Thyroid gland (tissue), 4 donors: ENCODE measurements at regions of chr19 and their contacts with region 1.

Region 1: DNA sequence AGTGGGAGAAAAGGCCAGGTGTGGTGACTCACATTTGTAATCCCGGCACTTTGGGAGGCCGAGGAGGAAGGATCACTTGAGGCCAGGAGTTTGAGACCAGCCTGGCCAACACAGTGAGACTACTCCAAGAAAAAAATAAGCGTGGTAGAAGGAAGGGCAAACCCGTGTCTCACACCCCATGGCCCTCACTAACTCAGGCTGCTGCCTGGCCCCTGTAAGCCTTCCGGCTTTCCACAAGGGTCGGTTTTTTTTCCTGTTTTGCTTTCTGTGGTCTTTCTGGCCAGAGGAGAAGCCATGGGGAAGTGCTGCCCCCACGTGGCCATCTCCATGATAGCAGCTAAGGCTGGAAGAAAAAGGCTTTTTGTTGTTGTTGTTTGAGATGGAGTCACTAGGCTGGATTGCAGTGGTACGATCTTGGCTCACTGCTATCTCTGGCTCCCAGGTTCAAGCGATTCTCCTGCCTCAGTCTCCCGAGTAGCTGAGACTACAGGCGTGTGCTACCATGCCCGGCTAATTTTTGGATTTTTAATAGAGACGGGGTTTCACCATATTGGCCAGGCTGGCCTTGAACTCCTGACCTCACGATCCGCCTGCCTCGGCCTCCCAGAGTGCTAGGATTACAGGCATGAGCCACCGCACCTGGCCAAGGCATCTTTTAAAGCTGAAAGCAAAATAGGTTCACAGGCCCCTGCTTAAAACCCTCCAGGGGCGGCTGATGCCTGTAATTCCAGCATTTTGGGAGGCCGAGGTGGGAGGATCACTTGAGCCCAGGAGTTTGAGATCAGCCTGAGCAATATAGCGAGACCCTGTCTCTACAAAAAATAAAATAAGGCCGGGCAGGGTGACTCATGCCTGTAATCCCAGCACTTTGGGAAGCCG is 7.5 kb upstream of the ARHGEF18 start:
- DNase-seq: peak; percentile 69 to 77
- H3K4me3 ChIP-seq: no peak overlapping the region
- H3K27ac ChIP-seq: no peak overlapping the region
- H3K4me1 ChIP-seq: peaks cover 0 to 8% of the 10 kb centered on the region in 2 donors
- H3K27me3 ChIP-seq: no peaks in the 10 kb centered on the region
- CTCF ChIP-seq: peak; percentile 89 to 93 (median 92)
- POLR2A ChIP-seq: no peak

Region 2: GRCh38 chr19:7101498-7102253 is 239.5 kb before region 1 on chr19:
- intact Hi-C with region 1: loop called (anchors 2 kb)
- DNase-seq: no peak
- H3K4me3 ChIP-seq: no peak overlapping the region
- H3K27ac ChIP-seq: no peak overlapping the region
- H3K4me1 ChIP-seq: no peaks in the 10 kb centered on the region
- H3K27me3 ChIP-seq: no peaks in the 10 kb centered on the region
- CTCF ChIP-seq: no peak
- POLR2A ChIP-seq: no peak

Region 3: GRCh38 chr19:7145494-7146485 is 195.4 kb before region 1 on chr19:
- intact Hi-C with region 1: loop called (anchors 5 kb)
- DNase-seq: no peak
- H3K4me3 ChIP-seq: no peak overlapping the region
- H3K27ac ChIP-seq: no peak overlapping the region
- H3K4me1 ChIP-seq: no peaks in the 10 kb centered on the region
- H3K27me3 ChIP-seq: no peaks in the 10 kb centered on the region
- CTCF ChIP-seq: no peak
- POLR2A ChIP-seq: no peak